Posterior vena cava (tissue), 2 donors: ENCODE measurements at regions of chr15 and their contacts with region 1.

Region 1: DNA sequence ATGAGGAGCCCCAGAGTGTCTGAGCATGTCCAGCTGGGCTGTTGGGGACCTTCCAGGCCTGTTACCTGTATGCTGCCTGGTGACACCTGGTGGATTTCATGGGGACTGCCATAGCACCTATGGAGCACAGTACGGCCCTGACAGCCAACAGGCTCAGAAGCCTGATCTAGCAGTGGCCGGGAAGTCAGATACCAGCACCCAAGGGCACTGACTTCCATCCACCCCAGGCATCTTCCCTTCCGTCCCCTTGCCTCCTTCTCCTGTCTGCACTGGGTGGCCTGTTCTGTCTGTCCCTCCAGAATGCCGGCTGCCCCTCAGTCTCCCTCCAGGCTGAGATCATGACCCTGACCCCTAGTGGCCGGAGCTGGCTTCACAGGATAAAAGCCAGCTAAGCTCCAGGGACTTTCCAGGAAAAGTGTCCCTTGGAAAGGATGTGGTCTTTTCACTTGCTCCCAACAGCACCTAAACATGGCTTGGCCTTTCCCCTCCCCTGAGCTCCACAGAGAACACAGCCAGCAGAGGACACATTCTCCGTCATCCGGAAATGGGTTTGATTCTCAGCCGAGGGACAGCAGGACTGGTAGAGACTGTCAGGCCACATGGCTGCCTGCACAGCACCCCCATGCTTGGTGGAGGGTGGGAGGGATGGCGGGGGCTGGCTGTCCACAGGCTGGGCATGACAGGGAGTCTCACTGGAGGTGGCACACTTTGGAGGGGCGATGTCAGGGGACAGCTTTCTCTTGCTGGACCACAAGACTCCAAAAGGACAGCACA is 9.5 kb downstream of the RPS17 start:
- DNase-seq: peak; percentile 88

Region 2: GRCh38 chr15:82999905-83000671 is 469.3 kb after region 1 on chr15:
- intact Hi-C with region 1: loop called (anchors 10 kb)
- DNase-seq: no peak